ENCODE measurements at regions of chr1 and their contacts with region 1.

Region 1: DNA sequence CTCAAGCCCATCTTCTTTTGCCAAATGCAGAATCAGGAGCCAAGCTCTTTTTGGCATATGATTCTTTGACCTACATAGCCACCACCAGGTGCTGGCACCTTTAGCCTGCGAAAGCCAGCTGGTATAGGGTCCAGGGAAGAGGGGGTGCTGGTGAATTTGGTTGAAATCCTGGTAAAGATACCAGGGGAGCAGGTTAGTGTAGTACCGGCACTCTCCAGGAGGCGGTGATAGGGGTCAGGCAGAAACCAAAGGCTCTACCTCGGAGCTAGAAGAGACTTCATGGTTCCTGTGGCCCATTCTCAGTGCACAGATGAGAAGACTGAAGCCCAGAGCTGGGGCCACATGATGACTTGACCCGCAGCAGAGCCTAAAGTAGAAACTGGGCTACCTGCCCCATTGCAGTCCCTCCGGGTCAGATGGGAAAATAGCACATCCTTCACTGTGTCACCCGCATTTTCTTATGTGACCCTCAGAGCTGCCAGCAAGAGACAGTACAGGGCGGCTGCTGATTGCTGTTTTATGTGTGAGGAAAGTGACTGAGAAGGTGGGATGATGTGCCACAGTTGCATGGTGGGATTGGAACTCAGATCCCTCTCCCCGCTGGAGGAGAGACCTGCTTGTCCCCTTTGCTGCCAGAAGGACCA is 36.0 kb upstream of the IL19 start:
- DNase-seq: peak; percentile 45 to 59 (median 55)
- H3K4me3 ChIP-seq: peak overlapping the region in 1 of 3 experiments; percentile 18
- H3K4me3 Mint-ChIP-seq: no peak overlapping the region
- H3K27ac ChIP-seq: peak overlapping the region in 1 of 2 donors; percentile 49
- H3K27ac Mint-ChIP-seq: peak overlapping the region; percentile 14 to 81 (median 31)
- H3K4me1 ChIP-seq: peaks cover 38 to 47% of the 10 kb centered on the region in 2 donors
- H3K4me1 Mint-ChIP-seq: peaks cover 55% of the 10 kb centered on the region
- H3K27me3 ChIP-seq: no peaks in the 10 kb centered on the region
- H3K27me3 Mint-ChIP-seq: peaks cover 0 to 1% (median 0%) of the 10 kb centered on the region in 3 donors
- CTCF ChIP-seq: peak; percentile 92

Region 2: GRCh38 chr1:206786212-206786886 is 51.7 kb after region 1 on chr1:
- intact Hi-C with region 1: loop called in 1 of 2 experiments (anchors 5 kb)
- DNase-seq: no peak
- H3K4me3 ChIP-seq: no peak overlapping the region
- H3K4me3 Mint-ChIP-seq: peak overlapping the region in 1 of 2 donors; percentile 31
- H3K27ac ChIP-seq: no peak overlapping the region
- H3K27ac Mint-ChIP-seq: peak overlapping the region in 2 of 7 donors; percentile 10 to 24
- H3K4me1 ChIP-seq: peaks cover 11% of the 10 kb centered on the region in 2 donors
- H3K4me1 Mint-ChIP-seq: peaks cover 34% of the 10 kb centered on the region
- H3K27me3 ChIP-seq: no peaks in the 10 kb centered on the region
- H3K27me3 Mint-ChIP-seq: peaks cover 3 to 6% (median 4%) of the 10 kb centered on the region in 3 donors
- CTCF ChIP-seq: no peak

Region 3: DNA sequence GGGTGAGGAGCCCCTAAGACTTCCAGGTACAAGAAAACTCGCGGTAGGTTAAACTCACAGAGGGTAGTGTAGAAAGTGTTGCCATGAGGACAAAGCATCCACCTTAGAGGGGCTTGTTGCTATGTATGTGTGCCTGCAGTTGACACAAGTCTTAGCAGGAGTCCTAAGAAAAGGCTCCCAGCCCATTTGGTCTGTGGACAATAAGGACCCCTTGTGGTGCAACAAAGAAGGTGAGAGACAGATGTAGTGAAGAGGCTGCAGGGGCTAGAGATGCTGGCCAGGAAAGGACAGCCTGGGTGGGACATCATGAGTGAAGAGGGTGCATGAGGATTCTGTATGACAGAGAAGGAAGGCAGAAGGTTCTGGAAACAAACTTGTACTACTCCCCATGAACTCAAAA is 74.0 kb after region 1 on chr1:
- intact Hi-C with region 1: loop called (anchors 2 to 5 kb)
- DNase-seq: peak; percentile 39 to 62 (median 58)
- H3K4me3 ChIP-seq: no peak overlapping the region
- H3K4me3 Mint-ChIP-seq: no peak overlapping the region
- H3K27ac ChIP-seq: no peak overlapping the region
- H3K27ac Mint-ChIP-seq: peak overlapping the region in 1 of 7 donors; percentile 60
- H3K4me1 ChIP-seq: no peaks in the 10 kb centered on the region
- H3K4me1 Mint-ChIP-seq: no peaks in the 10 kb centered on the region
- H3K27me3 ChIP-seq: no peaks in the 10 kb centered on the region
- H3K27me3 Mint-ChIP-seq: peaks cover 3 to 7% (median 4%) of the 10 kb centered on the region in 3 donors
- CTCF ChIP-seq: peak; percentile 64

Region 4: DNA sequence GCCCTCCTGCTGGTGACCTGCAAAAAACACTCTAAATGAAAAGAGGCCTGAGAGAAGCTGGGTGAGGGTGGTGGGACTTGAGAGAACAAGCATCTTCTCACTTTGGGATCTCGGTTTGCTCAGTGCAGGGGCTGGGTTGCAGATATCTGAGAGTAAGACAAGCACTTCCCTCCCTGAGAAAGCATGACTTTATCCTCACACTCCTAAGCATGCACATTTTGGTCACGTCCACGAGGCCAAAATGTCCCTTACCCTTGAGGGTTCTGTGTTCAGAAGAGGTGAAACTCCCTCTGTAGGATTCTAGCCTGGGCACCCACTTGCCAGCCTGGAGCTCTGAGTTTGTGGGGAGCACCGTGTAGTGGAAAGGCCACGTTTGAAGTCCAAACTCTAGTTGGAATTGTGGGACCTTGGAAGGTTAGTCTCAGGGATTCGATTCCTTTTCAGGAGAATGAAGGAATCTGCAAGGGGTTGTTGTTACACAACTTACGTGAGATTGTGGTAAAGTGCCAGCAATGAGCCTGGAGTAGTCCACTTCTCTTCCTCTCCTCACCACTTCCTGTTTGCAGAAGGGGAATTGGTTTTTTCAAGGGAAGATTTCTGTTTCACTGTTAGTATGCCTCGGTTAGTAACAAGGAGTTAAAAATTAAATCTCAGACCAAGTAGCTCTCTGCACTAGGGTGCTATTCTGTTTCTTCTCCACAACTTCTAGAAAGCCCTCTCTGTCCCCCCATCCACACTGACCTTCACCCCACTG is 232.7 kb after region 1 on chr1:
- intact Hi-C with region 1: loop called in 1 of 2 experiments (anchors 10 kb)
- DNase-seq: peak; percentile 73 to 88 (median 85)
- H3K4me3 ChIP-seq: peak overlapping the region in 2 of 3 experiments; percentile 20 to 59
- H3K4me3 Mint-ChIP-seq: peak overlapping the region; percentile 56 to 86
- H3K27ac ChIP-seq: peak overlapping the region in 1 of 2 donors; percentile 42
- H3K27ac Mint-ChIP-seq: peak overlapping the region; percentile 58 to 91 (median 86)
- H3K4me1 ChIP-seq: peaks cover 68 to 75% of the 10 kb centered on the region in 2 donors
- H3K4me1 Mint-ChIP-seq: peaks cover 70% of the 10 kb centered on the region
- H3K27me3 ChIP-seq: no peaks in the 10 kb centered on the region
- H3K27me3 Mint-ChIP-seq: peaks cover 19 to 29% (median 20%) of the 10 kb centered on the region in 3 donors
- CTCF ChIP-seq: no peak